ENCODE measurements at regions of chr10 and their contacts with region 1.

Region 1: GRCh38 chr10:87804939-87805569 is 13.0 kb downstream of the ATAD1 start:
- DNase-seq: no peak
- H3K4me3 ChIP-seq: no peak overlapping the region
- H3K27ac ChIP-seq: no peak overlapping the region
- H3K4me1 ChIP-seq: no peaks in the 10 kb centered on the region
- CTCF ChIP-seq: no peak

Region 2: DNA sequence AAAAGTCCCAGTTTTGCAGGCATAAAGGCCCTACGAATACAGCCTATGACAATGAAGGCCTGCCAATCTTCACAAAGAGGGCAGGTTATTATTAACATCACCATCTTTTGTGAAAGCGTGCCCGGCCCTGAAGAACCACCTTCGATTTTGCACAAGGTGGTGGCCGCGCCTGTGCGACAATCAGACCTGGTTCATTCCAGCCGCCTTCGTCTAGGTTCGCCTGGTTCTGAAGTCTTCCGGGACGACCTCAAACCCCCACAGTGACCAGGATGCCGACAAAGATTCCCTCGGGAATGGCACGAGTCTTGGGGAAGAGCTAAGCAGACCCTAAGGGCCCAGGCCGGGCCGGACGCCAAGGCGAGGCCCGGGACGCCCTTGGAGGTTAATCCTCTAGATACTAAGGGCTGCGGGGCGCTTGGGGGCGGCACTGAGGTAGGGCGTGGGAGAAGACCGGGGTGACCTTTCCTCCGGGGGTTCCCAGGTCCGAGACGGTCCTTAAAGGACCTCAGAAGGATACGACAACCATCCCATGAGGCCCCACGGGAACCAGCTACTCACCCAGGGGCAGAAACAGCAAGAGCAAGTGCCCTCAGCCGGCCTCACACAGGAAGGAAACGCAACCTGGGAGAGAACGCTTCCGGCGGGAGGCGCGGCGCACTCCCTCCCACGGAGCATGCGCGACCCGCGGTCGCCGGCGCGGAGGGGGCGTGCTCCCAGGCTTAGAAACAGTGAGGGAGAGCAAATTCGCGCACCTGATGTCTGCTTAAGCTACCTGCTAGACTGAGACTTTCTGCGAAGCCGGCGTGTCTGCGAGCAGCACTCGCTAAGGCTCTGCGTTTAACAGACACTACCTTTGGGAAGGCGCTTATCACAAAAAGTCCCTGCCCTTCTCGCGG is 12.8 kb after region 1 on chr10 and contains the start of gene ATAD1:
- CTCF ChIA-PET with region 1: no interaction called
- POLR2A ChIA-PET with region 1: interaction called, 14 read pairs
- intact Hi-C with region 1: no loop called
- DNase-seq: peak; percentile 93
- H3K4me3 ChIP-seq: peak within 1 kb of the TSS; percentile 86
- H3K27ac ChIP-seq: peak within 1 kb of the TSS; percentile 79
- H3K4me1 ChIP-seq: peaks cover 28% of the 10 kb centered on the region
- CTCF ChIP-seq: peak; percentile 28; the same call in 1 of the 2 replicates
- total RNA-seq, gene ATAD1: 17.7 and 19.6 TPM in 2 replicates

Region 3: GRCh38 chr10:88616251-88616977 is 811.4 kb after region 1 on chr10:
- CTCF ChIA-PET with region 1: no interaction called
- POLR2A ChIA-PET with region 1: no interaction called
- intact Hi-C with region 1: no loop called
- DNase-seq: no peak
- H3K4me3 ChIP-seq: no peak overlapping the region
- H3K27ac ChIP-seq: no peak overlapping the region
- H3K4me1 ChIP-seq: no peaks in the 10 kb centered on the region
- CTCF ChIP-seq: no peak